Activated naive CD4-positive, alpha-beta T cell treated with anti-CD3 and anti-CD28 coated beads for 36 hours (primary cell): ENCODE measurements at regions of chr11 and their contacts with region 1.

Region 1: GRCh38 chr11:33015621-33016551 is at the start of gene DEPDC7:
- DNase-seq: peak; percentile 84
- H3K4me3 Mint-ChIP-seq: peak within 1 kb of the TSS; percentile 84
- H3K27ac Mint-ChIP-seq: no peak within 1 kb of the TSS
- H3K4me1 Mint-ChIP-seq: peaks cover 53% of the 10 kb centered on the region
- H3K27me3 Mint-ChIP-seq: peaks cover 9% of the 10 kb centered on the region
- total RNA-seq, gene DEPDC7: 2.2 to 2.5 TPM

Region 2: DNA sequence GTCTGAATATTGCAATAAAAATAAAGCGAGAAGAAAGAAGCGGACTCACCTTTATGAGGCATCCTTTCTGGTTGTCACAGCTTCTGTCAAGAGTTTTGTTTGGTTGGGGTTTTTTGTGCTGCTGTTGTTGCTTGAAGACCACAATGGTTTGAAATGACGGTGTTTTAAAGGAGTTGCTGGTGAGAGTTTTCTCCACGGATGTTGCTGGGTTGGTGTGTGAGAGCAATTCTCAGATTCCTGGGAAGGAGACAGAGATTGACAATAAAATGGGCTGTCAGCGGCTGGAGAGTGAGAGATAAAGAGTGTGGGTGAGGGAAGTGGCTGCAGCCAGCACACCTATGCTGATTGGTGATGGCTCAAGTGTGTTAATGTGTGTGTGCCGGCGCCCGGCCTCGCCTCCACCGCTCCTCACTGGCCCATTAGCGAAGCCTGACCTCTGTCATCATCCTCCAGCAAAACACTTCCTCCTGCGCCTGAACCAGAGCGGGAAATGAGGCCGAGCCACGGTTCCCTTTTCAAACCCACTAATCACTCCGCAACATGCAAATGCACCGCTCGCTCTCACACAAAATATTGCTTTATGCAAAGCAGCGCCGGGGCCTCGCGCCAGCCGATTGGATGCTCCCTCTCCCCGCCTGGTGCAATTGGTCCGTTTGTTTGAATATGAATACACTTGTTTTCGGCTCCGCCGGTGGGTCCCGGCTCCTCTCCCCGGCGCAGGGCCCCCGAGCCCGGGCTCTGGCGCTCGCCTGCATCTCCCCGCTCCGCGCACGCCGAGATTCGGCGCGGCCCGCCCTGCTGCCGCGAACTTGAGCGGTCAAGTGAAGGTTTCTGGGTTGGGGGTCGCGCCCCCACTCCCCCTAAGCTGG is 1204.9 kb before region 1 on chr11 and contains the start of gene PAX6:
- CTCF ChIA-PET with region 1: no interaction called
- intact Hi-C with region 1: loop called (anchors 5 kb)
- DNase-seq: peak; percentile 82
- H3K4me3 Mint-ChIP-seq: peak within 1 kb of the TSS; percentile 73
- H3K27ac Mint-ChIP-seq: no peak within 1 kb of the TSS
- H3K4me1 Mint-ChIP-seq: peaks cover 47% of the 10 kb centered on the region
- H3K27me3 Mint-ChIP-seq: peaks cover 76% of the 10 kb centered on the region
- total RNA-seq, gene PAX6: 1.5 TPM

Region 3: GRCh38 chr11:32658639-32659406 is 357.1 kb before region 1 on chr11:
- CTCF ChIA-PET with region 1: no interaction called
- intact Hi-C with region 1: loop called (anchors 1 kb)
- DNase-seq: no peak
- H3K4me3 Mint-ChIP-seq: no peak overlapping the region
- H3K27ac Mint-ChIP-seq: no peak overlapping the region
- H3K4me1 Mint-ChIP-seq: peaks cover 13% of the 10 kb centered on the region
- H3K27me3 Mint-ChIP-seq: peaks cover 11% of the 10 kb centered on the region

Region 4: GRCh38 chr11:32960553-32961164 is 55.2 kb before region 1 on chr11:
- CTCF ChIA-PET with region 1: no interaction called
- intact Hi-C with region 1: loop called (anchors 1 kb)
- DNase-seq: no peak
- H3K4me3 Mint-ChIP-seq: no peak overlapping the region
- H3K27ac Mint-ChIP-seq: no peak overlapping the region
- H3K4me1 Mint-ChIP-seq: peaks cover 8% of the 10 kb centered on the region
- H3K27me3 Mint-ChIP-seq: no peaks in the 10 kb centered on the region

Region 5: DNA sequence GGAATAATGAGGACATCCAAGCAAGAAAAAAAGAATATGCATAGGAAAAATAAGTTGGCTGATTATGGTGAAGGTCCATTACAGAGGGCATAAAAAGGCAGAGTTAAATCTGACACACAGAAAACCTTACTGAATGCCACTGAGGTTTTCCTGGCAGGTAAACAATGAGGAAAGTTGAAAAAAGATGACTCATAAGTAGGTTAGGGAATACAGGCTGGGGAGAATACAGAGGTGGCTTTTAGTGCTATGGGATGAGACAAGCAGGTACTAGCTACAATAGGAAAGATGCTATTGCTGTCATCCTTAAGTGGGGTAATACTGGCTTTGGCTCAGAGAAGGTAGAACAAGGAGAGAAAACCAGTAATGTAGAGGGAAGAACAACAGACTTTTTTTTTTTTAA is 100.6 kb after region 1 on chr11:
- CTCF ChIA-PET with region 1: no interaction called
- intact Hi-C with region 1: no loop called
- DNase-seq: no peak
- H3K4me3 Mint-ChIP-seq: no peak overlapping the region
- H3K27ac Mint-ChIP-seq: no peak overlapping the region
- H3K4me1 Mint-ChIP-seq: no peaks in the 10 kb centered on the region
- H3K27me3 Mint-ChIP-seq: no peaks in the 10 kb centered on the region

Region 6: DNA sequence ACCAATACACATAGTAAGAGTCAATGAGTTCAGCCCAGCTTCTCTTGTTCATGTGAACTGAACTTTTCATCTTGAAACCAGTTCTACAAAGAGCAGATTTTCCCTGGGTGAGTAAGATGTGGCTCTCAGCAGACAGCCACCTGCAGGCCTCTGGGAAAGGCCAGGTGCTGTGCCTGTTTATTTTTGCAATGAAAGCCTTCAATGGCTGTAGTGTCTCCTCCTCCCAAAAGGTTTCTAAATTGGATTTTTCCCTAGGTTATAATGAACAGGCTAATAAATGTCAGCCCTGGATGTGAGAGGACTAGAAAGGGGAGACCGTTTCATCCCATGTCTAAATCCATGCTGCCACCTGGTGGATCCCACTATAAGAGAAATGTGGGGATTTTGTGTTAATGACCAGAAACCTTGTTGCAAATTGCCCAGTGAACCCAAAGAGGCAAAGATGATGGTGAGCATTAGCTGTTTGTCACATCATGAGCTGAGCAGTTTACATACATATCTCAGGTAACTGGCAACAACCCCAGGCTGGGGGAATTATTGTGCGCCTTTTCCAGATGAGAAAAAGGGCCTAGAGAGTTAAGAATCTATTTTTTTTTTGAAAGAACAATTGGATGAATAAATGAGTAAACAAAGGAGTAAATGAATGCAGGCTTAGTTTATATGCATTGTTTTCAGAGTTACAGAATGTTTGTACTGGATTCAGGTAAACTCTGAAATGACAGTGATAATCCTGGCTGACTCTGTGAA is 672.0 kb after region 1 on chr11:
- CTCF ChIA-PET with region 1: no interaction called
- intact Hi-C with region 1: loop called (anchors 2 kb)
- DNase-seq: peak; percentile 36
- H3K4me3 Mint-ChIP-seq: no peak overlapping the region
- H3K27ac Mint-ChIP-seq: no peak overlapping the region
- H3K4me1 Mint-ChIP-seq: peaks cover 3% of the 10 kb centered on the region
- H3K27me3 Mint-ChIP-seq: peaks cover 12% of the 10 kb centered on the region

Region 7: DNA sequence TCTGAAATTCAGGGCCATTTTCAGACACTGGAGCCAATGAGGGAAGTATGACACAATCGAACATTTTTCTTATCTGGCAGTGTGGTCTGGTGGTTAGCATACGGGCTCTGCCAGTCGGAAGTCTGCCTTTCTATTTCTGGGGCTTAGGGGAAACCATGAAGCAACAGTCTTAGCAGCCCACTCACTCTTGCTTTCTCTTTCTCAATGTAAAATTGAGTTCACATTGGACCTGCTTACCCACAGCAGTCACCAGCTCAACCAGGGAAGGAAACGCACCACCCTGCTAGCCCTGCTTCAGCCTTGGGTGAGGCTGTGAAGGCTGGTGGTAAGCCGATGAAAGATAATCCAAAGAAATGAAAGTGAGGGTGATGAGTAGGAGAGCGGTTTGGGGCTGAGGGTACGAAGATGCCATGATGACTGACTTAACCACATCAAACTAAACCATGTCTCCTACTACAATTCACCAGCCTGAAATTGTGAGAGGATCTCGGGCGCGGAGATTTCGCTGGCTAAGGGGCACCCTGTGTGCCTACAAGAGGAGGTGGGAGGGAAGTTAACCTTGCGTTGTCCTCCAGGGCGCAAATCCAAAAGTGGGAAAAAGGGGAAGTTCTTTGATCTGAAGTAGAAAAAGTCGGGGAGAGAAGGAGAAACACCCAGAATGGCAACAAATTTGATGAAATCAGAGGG is 878.0 kb after region 1 on chr11:
- CTCF ChIA-PET with region 1: no interaction called
- intact Hi-C with region 1: loop called (anchors 1 kb)
- DNase-seq: peak; percentile 87
- H3K4me3 Mint-ChIP-seq: peak overlapping the region; percentile 57
- H3K27ac Mint-ChIP-seq: peak overlapping the region; percentile 33
- H3K4me1 Mint-ChIP-seq: peaks cover 47% of the 10 kb centered on the region
- H3K27me3 Mint-ChIP-seq: peaks cover 47% of the 10 kb centered on the region